ENCODE measurements at regions of chr6 and their contacts with region 1.

Region 1: DNA sequence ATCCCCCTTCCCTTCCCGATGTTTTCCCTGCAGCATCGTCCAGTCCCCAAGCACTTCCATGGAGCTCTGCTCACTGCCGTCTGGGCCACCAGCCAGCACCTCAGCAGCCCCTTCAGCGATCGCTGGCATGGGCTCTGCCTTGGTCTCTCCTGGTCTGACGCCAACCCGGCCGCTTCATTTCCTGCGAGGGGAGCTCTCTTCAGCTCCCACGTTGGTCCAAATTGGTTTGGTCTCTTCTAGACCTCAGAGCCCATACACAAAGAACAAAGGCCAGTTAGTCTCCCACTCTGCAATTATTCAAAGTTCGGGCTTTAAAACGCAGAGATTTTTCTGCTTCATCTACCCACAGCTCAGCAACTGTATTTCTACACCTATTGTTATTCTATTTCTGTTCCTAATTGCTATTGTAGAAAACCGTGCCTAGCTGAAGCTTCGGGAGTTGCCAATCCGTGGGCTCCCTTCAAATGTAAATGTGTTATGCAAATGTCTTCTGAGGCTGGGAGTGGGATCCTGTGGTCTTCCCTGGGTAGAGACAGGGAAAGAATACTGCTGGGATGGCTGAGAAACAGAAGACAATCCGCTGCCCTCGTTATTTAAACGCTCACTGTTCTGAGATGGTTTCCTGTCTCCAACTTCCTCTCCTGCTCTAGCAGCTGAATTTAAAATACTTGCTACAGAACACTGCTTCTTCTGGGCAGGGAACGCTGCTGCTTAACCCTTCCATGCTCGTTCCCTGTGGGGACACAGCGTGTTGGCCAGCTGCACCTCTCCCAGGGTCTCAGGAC is 154.2 kb upstream of the QKI start:
- DNase-seq: peak in 5 of 10 donors; percentile 35 to 82 (median 70)
- H3K4me3 ChIP-seq: peak overlapping the region in 57 of 59 donors; percentile 1 to 66 (median 37)
- H3K27ac ChIP-seq: peak overlapping the region; percentile 86 to 100 (median 98)
- H3K27me3 ChIP-seq: no peaks in the 10 kb centered on the region
- CTCF ChIP-seq: peak in 1 of 56 donors; percentile 0

Region 2: GRCh38 chr6:163309491-163310026 is 49.3 kb after region 1 on chr6:
- intact Hi-C with region 1: loop called (anchors 5 kb)
- DNase-seq: no peak
- H3K4me3 ChIP-seq: no peak overlapping the region
- H3K27ac ChIP-seq: peak overlapping the region in 50 of 59 donors; percentile 13 to 100 (median 96)
- H3K27me3 ChIP-seq: no peaks in the 10 kb centered on the region
- CTCF ChIP-seq: no peak

Region 3: GRCh38 chr6:163324411-163325389 is 64.4 kb after region 1 on chr6:
- intact Hi-C with region 1: loop called in 1 of 2 experiments (anchors 5 kb)
- DNase-seq: peak in 9 of 10 donors; percentile 53 to 83 (median 74)
- H3K4me3 ChIP-seq: peak overlapping the region in 43 of 59 donors; percentile 0 to 52 (median 23)
- H3K27ac ChIP-seq: peak overlapping the region; percentile 67 to 100 (median 96)
- H3K27me3 ChIP-seq: no peaks in the 10 kb centered on the region
- CTCF ChIP-seq: peak in 14 of 56 donors; percentile 9 to 47 (median 24)

Measured in dorsolateral prefrontal cortex (tissue), 120 donors.